Activated CD4-positive, alpha-beta memory T cell treated with anti-CD3 and anti-CD28 coated beads for 36 hours (primary cell): ENCODE measurements at regions of chr11 and their contacts with region 1.

Region 1: GRCh38 chr11:10540923-10541560 is at the start of gene RNF141:
- DNase-seq: peak; percentile 97
- H3K4me3 Mint-ChIP-seq: peak within 1 kb of the TSS; percentile 90
- H3K27ac Mint-ChIP-seq: peak within 1 kb of the TSS; percentile 40
- H3K4me1 Mint-ChIP-seq: peaks cover 12% of the 10 kb centered on the region
- H3K27me3 Mint-ChIP-seq: no peaks in the 10 kb centered on the region
- total RNA-seq, gene RNF141: 17.9 to 18.7 TPM

Region 2: GRCh38 chr11:10405855-10406592 is 135.0 kb before region 1 on chr11:
- CTCF ChIA-PET with region 1: interaction called, 21 read pairs
- POLR2A ChIA-PET with region 1: no interaction called
- intact Hi-C with region 1: no loop called
- DNase-seq: peak; percentile 60
- H3K4me3 Mint-ChIP-seq: no peak overlapping the region
- H3K27ac Mint-ChIP-seq: no peak overlapping the region
- H3K4me1 Mint-ChIP-seq: peaks cover 15% of the 10 kb centered on the region
- H3K27me3 Mint-ChIP-seq: no peaks in the 10 kb centered on the region

Region 3: GRCh38 chr11:10413268-10413667 is 127.8 kb before region 1 on chr11:
- CTCF ChIA-PET with region 1: interaction called, 22 read pairs
- POLR2A ChIA-PET with region 1: no interaction called
- intact Hi-C with region 1: loop called (anchors 2 kb)
- DNase-seq: peak; percentile 54
- H3K4me3 Mint-ChIP-seq: no peak overlapping the region
- H3K27ac Mint-ChIP-seq: no peak overlapping the region
- H3K4me1 Mint-ChIP-seq: peaks cover 31% of the 10 kb centered on the region
- H3K27me3 Mint-ChIP-seq: no peaks in the 10 kb centered on the region

Region 4: DNA sequence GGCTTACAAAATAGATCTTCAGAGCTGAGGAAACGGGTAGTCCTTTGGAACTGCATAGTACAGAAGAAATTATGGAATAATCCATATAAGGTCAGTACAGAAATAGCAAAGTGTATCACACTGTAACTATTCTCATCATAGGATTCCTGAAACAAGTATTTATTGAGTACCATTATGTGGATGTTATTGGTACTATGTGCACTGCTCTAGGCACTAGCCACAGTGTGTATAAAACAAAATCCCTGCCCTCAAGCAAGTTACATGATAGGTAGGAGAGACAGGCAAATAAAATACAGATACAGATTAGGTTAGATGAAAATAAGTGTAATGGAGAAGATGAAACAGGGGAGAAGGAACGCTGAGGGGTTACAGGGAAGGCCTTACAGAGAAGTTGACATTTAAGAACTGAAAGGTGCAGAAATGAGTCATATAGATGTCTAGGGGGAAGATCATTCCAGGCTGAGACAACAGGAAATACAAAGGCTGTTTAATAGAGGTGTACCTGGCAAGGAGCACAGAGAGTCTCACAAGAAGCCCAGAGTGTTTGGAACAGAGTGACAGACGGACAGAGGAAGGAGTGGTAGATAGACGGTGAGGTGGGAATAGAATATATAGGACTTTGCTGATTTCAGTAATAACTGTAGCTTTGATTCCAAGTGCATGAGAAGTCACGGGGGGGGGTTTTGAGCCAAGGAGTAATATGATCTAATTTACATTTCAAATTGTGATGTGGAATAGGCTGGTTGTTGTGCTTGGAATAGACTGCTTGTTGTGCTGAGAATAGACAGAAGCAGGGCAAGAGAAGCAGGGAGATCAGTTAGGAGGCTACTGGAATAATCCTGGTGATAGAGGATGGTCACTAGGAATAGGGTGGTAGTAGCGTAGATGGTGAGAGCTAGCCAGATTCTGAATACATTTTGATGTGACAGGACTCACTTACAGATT is 13.8 kb before region 1 on chr11:
- CTCF ChIA-PET with region 1: interaction called, 43 read pairs
- POLR2A ChIA-PET with region 1: interaction called, 3 read pairs
- intact Hi-C with region 1: no loop called
- DNase-seq: no peak
- H3K4me3 Mint-ChIP-seq: no peak overlapping the region
- H3K27ac Mint-ChIP-seq: peak overlapping the region; percentile 42
- H3K4me1 Mint-ChIP-seq: peaks cover 15% of the 10 kb centered on the region
- H3K27me3 Mint-ChIP-seq: no peaks in the 10 kb centered on the region

Region 5: GRCh38 chr11:10558288-10558687 is 17.2 kb after region 1 on chr11:
- CTCF ChIA-PET with region 1: interaction called, 11 read pairs
- POLR2A ChIA-PET with region 1: interaction called, 3 read pairs
- intact Hi-C with region 1: no loop called
- DNase-seq: no peak
- H3K4me3 Mint-ChIP-seq: no peak overlapping the region
- H3K27ac Mint-ChIP-seq: no peak overlapping the region
- H3K4me1 Mint-ChIP-seq: no peaks in the 10 kb centered on the region
- H3K27me3 Mint-ChIP-seq: peaks cover 3% of the 10 kb centered on the region

Region 6: DNA sequence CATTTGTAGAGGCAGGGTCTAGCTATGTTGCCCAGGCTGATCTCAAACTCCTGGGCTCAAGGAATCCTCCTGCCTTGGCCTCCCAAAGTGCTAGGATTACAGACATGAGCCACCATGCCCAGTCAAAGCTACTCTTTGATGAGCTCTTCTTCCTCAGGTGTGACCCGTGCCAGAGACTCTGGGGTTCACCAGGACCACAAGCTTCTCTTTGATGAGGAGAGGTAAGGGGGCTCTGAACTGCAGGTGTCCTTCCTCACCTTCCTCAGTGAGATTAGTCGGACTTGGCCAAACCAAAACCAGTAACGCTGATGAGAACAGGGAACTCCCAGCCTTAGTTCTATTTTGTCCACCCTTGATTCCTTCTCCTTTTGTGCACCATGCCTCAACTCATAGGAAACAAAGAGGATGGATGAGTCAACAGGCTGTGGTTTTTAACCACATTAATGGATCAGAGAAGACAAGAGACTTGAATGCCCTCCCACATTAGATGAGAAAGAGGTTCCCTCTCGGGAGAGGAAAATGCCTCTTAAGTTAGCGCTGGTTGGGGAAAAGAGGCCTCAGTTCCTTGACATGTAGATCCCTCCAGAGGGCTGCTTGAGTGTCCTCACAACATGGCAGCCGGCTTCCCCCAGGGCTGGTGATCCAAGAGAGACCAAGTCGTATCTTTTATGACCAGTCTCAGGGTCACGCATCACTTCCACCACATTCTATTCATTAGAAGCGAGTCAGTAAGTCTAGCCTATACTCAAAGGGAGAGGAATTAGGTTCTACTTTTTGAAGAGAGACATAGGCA is 184.3 kb after region 1 on chr11:
- CTCF ChIA-PET with region 1: interaction called, 10 read pairs
- POLR2A ChIA-PET with region 1: interaction called, 3 read pairs
- intact Hi-C with region 1: no loop called
- DNase-seq: peak; percentile 52
- H3K4me3 Mint-ChIP-seq: peak overlapping the region; percentile 9
- H3K27ac Mint-ChIP-seq: peak overlapping the region; percentile 69
- H3K4me1 Mint-ChIP-seq: peaks cover 16% of the 10 kb centered on the region
- H3K27me3 Mint-ChIP-seq: peaks cover 7% of the 10 kb centered on the region

Region 7: GRCh38 chr11:10742471-10743208 is 201.6 kb after region 1 on chr11:
- CTCF ChIA-PET with region 1: interaction called, 6 read pairs
- POLR2A ChIA-PET with region 1: no interaction called
- intact Hi-C with region 1: loop called (anchors 2 kb)
- DNase-seq: peak; percentile 66
- H3K4me3 Mint-ChIP-seq: peak overlapping the region; percentile 37
- H3K27ac Mint-ChIP-seq: peak overlapping the region; percentile 74
- H3K4me1 Mint-ChIP-seq: peaks cover 39% of the 10 kb centered on the region
- H3K27me3 Mint-ChIP-seq: no peaks in the 10 kb centered on the region

Region 8: GRCh38 chr11:11105358-11105757 is 564.3 kb after region 1 on chr11:
- CTCF ChIA-PET with region 1: no interaction called
- POLR2A ChIA-PET with region 1: no interaction called
- intact Hi-C with region 1: no loop called
- DNase-seq: no peak
- H3K4me3 Mint-ChIP-seq: no peak overlapping the region
- H3K27ac Mint-ChIP-seq: no peak overlapping the region
- H3K4me1 Mint-ChIP-seq: no peaks in the 10 kb centered on the region
- H3K27me3 Mint-ChIP-seq: no peaks in the 10 kb centered on the region